GM12878 (cell line): ENCODE measurements at regions of chr12 and their contacts with region 1.

Region 1: DNA sequence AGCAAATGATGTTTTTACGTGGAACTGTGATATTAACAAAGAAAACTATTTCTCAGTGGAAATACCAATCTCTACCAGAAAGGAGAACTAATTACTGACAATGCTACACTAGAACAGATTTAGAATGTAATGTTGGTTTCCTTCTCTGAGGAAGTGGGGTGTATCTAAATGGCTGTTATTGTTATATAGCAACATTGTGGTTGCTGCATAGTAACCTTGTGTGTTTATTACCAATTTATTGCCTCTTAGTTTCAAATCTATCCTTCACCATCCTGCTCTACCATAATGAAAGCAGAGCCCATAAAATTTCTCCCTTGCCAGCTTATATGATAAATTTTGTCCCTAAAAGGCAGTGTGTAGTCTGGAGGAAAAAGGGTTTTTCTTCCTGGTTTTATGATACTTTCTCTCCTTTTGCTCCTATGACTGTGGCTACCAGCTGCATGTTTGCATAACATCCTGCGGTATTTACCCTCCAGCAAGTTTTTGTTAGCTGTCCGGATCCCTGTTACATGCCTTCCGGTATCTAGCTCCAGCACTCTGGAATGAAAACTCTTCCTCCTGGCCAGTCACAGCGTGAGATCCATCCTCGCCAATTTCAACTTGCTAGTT is 5.7 kb upstream of the KLRK1 start:
- DNase-seq: peak; percentile 60
- ATAC-seq: peak; percentile 83
- H3K4me3 ChIP-seq: no peak overlapping the region
- H3K27ac ChIP-seq: peak overlapping the region; percentile 53; the same call in 1 of the 2 replicates
- H3K4me1 ChIP-seq: peaks cover 9% of the 10 kb centered on the region; the same call in 1 of the 2 replicates
- H3K27me3 ChIP-seq: no peaks in the 10 kb centered on the region
- CTCF ChIP-seq: no peak
- EP300 ChIP-seq: peak; percentile 91 to 95
- POLR2A ChIP-seq: no peak
- RAD21 ChIP-seq: no peak

Region 2: GRCh38 chr12:10409387-10409786 is 13.9 kb after region 1 on chr12 and contains the start of gene KLRC4:
- CTCF ChIA-PET with region 1: interaction called, 13 read pairs
- POLR2A ChIA-PET with region 1: no interaction called
- RAD21 ChIA-PET with region 1: interaction called, 6 read pairs
- SMC1A ChIA-PET with region 1: interaction called, 17 read pairs
- in situ Hi-C with region 1: no loop called
- intact Hi-C with region 1: no loop called
- DNase-seq: no peak
- ATAC-seq: peak; percentile 51
- H3K4me3 ChIP-seq: no peak within 1 kb of the TSS
- H3K27ac ChIP-seq: no peak within 1 kb of the TSS
- H3K4me1 ChIP-seq: no peaks in the 10 kb centered on the region; the same call in 1 of the 2 replicates
- H3K27me3 ChIP-seq: no peaks in the 10 kb centered on the region
- CTCF ChIP-seq: no peak
- EP300 ChIP-seq: no peak
- POLR2A ChIP-seq: no peak
- RAD21 ChIP-seq: no peak
- polyA plus RNA-seq, gene KLRC4: 0.34 TPM in 1 of 2 experiments, not detected in the other

Region 3: DNA sequence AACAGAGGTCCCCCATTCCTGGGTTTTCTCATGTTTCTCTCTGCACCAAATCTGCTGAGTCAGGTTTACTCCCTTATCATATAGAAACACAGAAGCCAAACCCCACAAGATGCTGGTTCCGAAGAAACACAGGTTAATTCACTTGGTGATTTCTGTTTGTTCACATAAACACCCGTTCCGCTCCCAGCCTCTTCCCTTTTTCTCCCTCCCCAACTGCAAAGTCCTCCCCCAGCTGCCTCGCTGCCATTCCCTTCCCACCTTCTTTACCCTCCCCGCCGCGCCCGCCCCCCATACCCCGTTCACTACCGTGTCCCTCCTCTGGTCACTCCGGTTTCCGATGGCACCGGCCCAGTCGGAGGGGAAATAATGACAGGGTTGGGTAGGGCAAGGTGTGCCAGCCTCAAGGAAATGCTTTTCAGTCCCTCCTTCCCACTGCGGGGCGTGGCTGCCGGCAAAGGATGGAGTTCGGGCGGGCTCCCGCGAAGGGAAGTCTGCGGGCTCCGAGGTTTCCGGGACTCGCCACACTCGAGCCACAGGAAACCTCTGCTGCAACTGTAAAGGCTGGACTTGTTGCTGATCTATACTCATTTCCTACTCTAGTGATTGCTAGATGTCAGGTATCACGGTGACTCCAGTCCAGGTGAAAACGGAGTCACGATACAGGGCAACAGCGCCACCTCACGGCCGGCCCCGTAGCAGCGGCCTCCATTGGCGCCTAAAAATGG is 278.3 kb after region 1 on chr12 and contains the start of gene STYK1:
- CTCF ChIA-PET with region 1: no interaction called
- POLR2A ChIA-PET with region 1: no interaction called
- RAD21 ChIA-PET with region 1: no interaction called
- SMC1A ChIA-PET with region 1: no interaction called
- in situ Hi-C with region 1: no loop called
- intact Hi-C with region 1: loop called (anchors 10 kb)
- DNase-seq: peak; percentile 24
- ATAC-seq: peak; percentile 84
- H3K4me3 ChIP-seq: peak within 1 kb of the TSS; percentile 32
- H3K27ac ChIP-seq: no peak within 1 kb of the TSS
- H3K4me1 ChIP-seq: peaks cover 14% of the 10 kb centered on the region; the same call in 1 of the 2 replicates
- H3K27me3 ChIP-seq: peaks cover 0 to 2% of the 10 kb centered on the region in 2 experiments; a peak in 1 of 4 replicates
- CTCF ChIP-seq: peak; percentile 81 to 87 (median 83)
- EP300 ChIP-seq: no peak
- POLR2A ChIP-seq: no peak
- RAD21 ChIP-seq: peak; percentile 83
- polyA plus RNA-seq, gene STYK1: 0.73 to 0.87 TPM